Activated naive CD8-positive, alpha-beta T cell treated with anti-CD3 and anti-CD28 coated beads, Interleukin-2, amount 10 ng/mL, durations not matched to agents 7 days and 5 days (primary cell): ENCODE measurements at regions of chr16 and their contacts with region 1.

Region 1: GRCh38 chr16:4475880-4476788 is at the start of gene HMOX2:
- DNase-seq: peak; percentile 99
- ATAC-seq: peak; percentile 78
- H3K4me3 Mint-ChIP-seq: peak within 1 kb of the TSS; percentile 95
- H3K27ac Mint-ChIP-seq: peak within 1 kb of the TSS; percentile 89
- H3K4me1 Mint-ChIP-seq: peaks cover 31% of the 10 kb centered on the region
- H3K27me3 Mint-ChIP-seq: no peaks in the 10 kb centered on the region
- total RNA-seq, gene HMOX2: 84.5 to 86.9 TPM

Region 2: DNA sequence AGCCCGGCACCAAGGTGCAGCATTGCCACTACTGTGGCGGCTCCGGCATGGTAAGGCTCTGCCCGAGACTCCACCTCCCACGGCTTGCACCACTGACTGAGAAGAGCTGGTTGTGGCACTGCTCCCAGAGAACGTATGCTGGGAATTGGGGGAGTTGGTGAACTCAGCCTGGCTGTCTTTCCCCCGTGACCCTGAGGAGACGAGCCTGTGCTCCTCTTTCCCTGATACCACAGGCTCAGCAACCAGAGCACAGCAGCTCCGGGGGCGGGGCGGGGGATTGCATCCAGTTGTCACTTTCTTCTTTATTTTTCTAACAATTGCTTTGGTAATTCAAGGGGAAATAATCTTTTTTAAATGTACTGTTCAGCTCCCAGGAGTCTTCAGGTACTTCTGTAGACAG is 33.8 kb before region 1 on chr16:
- POLR2A ChIA-PET with region 1: no interaction called
- DNase-seq: no peak
- ATAC-seq: no peak
- H3K4me3 Mint-ChIP-seq: no peak overlapping the region
- H3K27ac Mint-ChIP-seq: no peak overlapping the region
- H3K4me1 Mint-ChIP-seq: peaks cover 9% of the 10 kb centered on the region
- H3K27me3 Mint-ChIP-seq: no peaks in the 10 kb centered on the region

Region 3: GRCh38 chr16:4487955-4488498 is 11.9 kb after region 1 on chr16:
- POLR2A ChIA-PET with region 1: interaction called, 112 read pairs
- DNase-seq: no peak
- ATAC-seq: peak; percentile 52
- H3K4me3 Mint-ChIP-seq: peak overlapping the region; percentile 84
- H3K27ac Mint-ChIP-seq: peak overlapping the region; percentile 97
- H3K4me1 Mint-ChIP-seq: peaks cover 41% of the 10 kb centered on the region
- H3K27me3 Mint-ChIP-seq: no peaks in the 10 kb centered on the region

Region 4: DNA sequence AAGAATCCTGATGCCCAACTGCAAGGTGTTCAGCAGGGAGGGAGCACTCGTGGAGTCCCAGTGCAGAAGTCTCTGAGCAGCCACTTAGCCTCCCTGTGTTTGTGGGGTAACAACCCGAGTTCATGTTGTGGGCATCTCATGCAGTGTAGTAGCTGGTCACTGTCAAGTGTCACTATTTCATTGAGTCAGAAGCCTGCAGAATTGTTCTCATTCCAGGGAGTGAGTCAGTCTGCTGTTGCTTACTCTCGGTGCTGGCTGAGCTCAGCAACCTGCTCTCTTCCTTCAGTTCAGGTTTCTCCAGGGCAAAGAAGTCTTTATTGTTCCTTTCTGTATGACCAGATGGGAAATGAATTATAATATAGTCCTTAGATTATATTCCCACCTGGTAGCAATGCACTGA is 24.1 kb after region 1 on chr16:
- POLR2A ChIA-PET with region 1: interaction called, 105 read pairs
- DNase-seq: no peak
- ATAC-seq: no peak
- H3K4me3 Mint-ChIP-seq: no peak overlapping the region
- H3K27ac Mint-ChIP-seq: peak overlapping the region; percentile 4
- H3K4me1 Mint-ChIP-seq: peaks cover 66% of the 10 kb centered on the region
- H3K27me3 Mint-ChIP-seq: no peaks in the 10 kb centered on the region

Region 5: GRCh38 chr16:4515611-4516233 is 39.6 kb after region 1 on chr16:
- POLR2A ChIA-PET with region 1: interaction called, 21 read pairs
- DNase-seq: no peak
- ATAC-seq: no peak
- H3K4me3 Mint-ChIP-seq: peak overlapping the region; percentile 77
- H3K27ac Mint-ChIP-seq: peak overlapping the region; percentile 87
- H3K4me1 Mint-ChIP-seq: peaks cover 51% of the 10 kb centered on the region
- H3K27me3 Mint-ChIP-seq: no peaks in the 10 kb centered on the region